ENCODE measurements at regions of chr1 and their contacts with region 1.

Region 1: DNA sequence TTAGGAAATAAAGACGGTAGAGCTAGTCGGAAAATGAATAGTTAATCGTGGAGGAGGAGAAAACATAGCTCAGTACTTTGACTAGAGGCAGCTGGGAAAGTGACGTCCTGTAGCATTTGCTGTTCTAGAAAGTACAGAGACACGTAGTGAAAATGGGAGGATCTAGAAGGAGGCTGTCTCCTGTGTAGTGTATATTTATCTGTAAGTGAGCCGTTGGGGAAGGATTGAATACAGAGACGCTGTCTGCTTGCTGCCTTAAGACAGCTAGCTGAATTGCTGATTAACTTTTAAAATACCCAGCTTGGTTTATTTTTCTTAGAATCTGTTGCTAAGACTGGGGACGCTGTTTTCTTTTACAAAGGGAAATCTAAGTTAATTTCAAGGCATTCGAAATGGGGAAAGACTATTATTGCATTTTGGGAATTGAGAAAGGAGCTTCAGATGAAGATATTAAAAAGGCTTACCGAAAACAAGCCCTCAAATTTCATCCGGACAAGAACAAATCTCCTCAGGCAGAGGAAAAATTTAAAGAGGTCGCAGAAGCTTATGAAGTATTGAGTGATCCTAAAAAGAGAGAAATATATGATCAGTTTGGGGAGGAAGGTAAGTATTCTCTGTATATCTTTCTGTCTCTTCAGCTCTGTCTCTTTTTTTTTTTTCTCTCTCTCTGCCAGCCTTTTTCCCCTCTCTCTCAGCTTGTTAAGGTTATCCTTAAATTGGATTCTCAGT is at the start of gene DNAJB4:
- DNase-seq: peak; percentile 25 to 95 (median 48)
- ATAC-seq: peak; percentile 98
- H3K4me3 ChIP-seq: peak within 1 kb of the TSS; percentile 71
- H3K4me3 Mint-ChIP-seq: peak within 1 kb of the TSS; percentile 86
- H3K27ac ChIP-seq: peak within 1 kb of the TSS; percentile 78 to 96
- H3K27ac Mint-ChIP-seq: peak within 1 kb of the TSS; percentile 98
- H3K4me1 ChIP-seq: peaks cover 4% of the 10 kb centered on the region
- H3K4me1 Mint-ChIP-seq: peaks cover 54% of the 10 kb centered on the region
- H3K27me3 ChIP-seq: no peaks in the 10 kb centered on the region
- H3K27me3 Mint-ChIP-seq: no peaks in the 10 kb centered on the region
- CTCF ChIP-seq: no peak
- total RNA-seq, gene DNAJB4: 19.2 to 22.7 TPM

Region 2: DNA sequence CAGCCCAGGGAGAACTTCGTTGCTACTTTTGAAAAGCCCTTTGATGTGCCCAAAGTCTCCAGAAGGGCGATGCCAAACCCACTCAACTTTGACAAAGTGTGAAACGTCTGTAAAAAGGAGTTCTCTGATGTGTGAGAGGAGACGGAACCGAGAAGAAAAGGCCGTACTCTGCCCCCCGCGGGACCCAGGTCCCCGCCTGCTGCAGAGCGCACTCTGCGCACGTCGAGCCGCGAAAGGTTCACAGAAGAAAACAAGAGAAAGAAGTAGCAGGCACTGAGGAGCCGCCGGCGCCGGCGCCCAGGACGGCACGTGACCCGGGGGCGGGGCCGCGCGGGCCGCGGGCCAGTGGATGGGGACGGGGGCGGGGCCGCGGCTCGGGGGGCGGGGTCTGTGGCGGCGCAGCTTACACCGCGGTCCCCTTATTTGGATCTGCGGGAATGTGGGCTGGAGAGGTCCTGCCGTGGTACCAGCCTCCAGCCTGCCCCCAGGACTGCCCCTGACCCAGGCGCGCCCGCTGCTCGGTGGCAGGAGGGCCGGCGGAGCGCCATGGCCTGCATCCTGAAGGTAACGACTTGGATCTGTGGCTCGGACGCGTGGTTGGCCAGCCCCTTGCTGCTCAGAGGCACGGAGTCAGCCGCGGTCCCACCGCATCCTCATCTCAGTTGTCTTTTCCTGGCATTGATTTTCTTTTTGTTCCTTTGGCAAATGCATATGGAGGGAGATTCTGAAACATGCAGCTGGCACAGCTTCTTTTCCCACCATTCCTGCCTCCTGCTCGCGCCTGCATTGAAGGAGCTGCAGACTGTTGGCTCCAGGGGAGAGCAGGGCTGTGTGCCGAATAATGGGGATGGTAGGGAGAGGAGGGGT is 1930.3 kb before region 1 on chr1 and contains the start of gene ST6GALNAC3:
- CTCF ChIA-PET with region 1: no interaction called
- POLR2A ChIA-PET with region 1: no interaction called
- intact Hi-C with region 1: loop called in 1 of 2 experiments (anchors 10 kb)
- DNase-seq: peak; percentile 59 to 91 (median 74)
- ATAC-seq: peak; percentile 96
- H3K4me3 ChIP-seq: peak within 1 kb of the TSS; percentile 80
- H3K4me3 Mint-ChIP-seq: peak within 1 kb of the TSS; percentile 93
- H3K27ac ChIP-seq: no peak within 1 kb of the TSS
- H3K27ac Mint-ChIP-seq: peak within 1 kb of the TSS; percentile 79
- H3K4me1 ChIP-seq: peaks cover 15% of the 10 kb centered on the region
- H3K4me1 Mint-ChIP-seq: peaks cover 23% of the 10 kb centered on the region
- H3K27me3 ChIP-seq: no peaks in the 10 kb centered on the region
- H3K27me3 Mint-ChIP-seq: no peaks in the 10 kb centered on the region
- CTCF ChIP-seq: no peak
- total RNA-seq, gene ST6GALNAC3: 0.77 to 1.3 TPM

Region 3: DNA sequence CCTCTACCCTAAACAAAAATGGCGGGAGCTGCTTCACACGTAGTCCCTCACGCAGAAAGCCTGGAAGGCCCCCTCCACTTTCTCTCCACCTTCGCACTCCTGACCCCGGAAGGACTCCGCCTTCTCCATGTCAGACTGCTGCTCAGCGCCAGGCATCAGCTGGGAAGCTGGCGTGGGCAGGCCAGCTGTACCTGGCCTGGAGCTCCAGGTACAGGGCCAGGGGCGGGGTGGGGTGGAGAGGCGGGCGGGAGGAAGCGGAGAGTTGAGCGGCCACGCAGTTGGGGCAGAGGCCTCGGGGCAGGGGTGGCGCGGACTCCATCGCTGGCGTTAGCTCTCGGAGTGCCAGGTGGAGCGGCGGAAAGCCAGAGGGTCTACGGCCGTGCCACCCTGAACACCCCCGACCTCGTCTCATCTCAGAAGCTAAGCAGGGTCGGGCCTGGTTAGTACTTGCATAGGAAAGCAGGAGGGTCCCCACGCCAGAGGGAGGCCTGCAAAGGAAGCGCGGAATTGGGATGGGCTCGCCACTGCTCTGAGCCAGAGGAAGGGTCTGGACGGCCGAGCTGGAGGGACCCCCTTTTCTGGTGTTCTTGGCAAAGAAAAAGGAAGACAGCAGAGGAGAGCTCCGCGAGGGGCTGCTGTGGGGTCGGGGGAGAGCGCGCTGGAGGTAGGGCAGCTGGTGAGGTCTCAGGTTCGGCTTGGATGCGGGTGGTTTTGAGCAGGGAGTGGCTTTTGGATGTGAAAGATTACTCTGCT is 225.2 kb before region 1 on chr1 and contains the start of gene MIGA1:
- CTCF ChIA-PET with region 1: no interaction called
- POLR2A ChIA-PET with region 1: interaction called, 16 read pairs
- intact Hi-C with region 1: no loop called
- DNase-seq: peak; percentile 78 to 96 (median 84)
- ATAC-seq: peak; percentile 98
- H3K4me3 ChIP-seq: peak within 1 kb of the TSS; percentile 96
- H3K4me3 Mint-ChIP-seq: peak within 1 kb of the TSS; percentile 97
- H3K27ac ChIP-seq: peak within 1 kb of the TSS; percentile 32 to 55
- H3K27ac Mint-ChIP-seq: peak within 1 kb of the TSS; percentile 89
- H3K4me1 ChIP-seq: peaks cover 14% of the 10 kb centered on the region
- H3K4me1 Mint-ChIP-seq: peaks cover 43% of the 10 kb centered on the region
- H3K27me3 ChIP-seq: no peaks in the 10 kb centered on the region
- H3K27me3 Mint-ChIP-seq: no peaks in the 10 kb centered on the region
- CTCF ChIP-seq: no peak
- total RNA-seq, gene MIGA1: 12.2 to 15.8 TPM

Region 4: DNA sequence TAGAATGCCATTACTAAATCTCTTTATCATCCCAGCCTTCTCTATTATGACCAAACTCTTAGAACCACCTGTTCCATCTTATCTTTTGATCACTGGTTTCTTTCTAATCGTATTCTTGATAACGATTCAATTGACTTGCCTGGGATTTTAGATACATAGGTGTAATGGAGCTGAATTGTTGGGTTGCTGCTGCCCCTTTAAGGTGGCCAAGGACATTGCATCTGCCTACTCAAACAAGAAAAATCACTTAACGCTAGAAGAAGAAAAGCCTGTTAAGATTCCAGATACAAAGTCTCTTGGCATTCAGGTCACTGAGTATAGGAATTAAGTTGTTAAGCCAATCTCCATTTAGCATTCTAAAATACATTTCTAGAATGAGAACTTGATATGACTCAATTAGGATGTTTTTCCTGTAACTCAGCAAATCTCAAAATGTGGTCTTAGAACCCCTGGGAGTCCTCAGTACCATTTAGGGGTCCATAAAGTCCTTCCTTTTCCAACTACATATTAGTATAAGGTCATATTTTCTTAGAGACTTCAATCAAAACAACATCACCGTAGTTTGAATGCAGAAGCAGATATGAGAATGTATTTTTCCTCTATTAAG is 104.1 kb before region 1 on chr1:
- CTCF ChIA-PET with region 1: no interaction called
- POLR2A ChIA-PET with region 1: no interaction called
- intact Hi-C with region 1: no loop called
- DNase-seq: peak in 3 of 14 experiments; percentile 12 to 28 (median 23)
- ATAC-seq: no peak
- H3K4me3 ChIP-seq: no peak overlapping the region
- H3K4me3 Mint-ChIP-seq: no peak overlapping the region
- H3K27ac ChIP-seq: no peak overlapping the region
- H3K27ac Mint-ChIP-seq: no peak overlapping the region
- H3K4me1 ChIP-seq: no peaks in the 10 kb centered on the region
- H3K4me1 Mint-ChIP-seq: no peaks in the 10 kb centered on the region
- H3K27me3 ChIP-seq: no peaks in the 10 kb centered on the region
- H3K27me3 Mint-ChIP-seq: no peaks in the 10 kb centered on the region
- CTCF ChIP-seq: peak; percentile 41

Region 5: GRCh38 chr1:77978969-77979876 is 25.7 kb before region 1 on chr1 and contains the start of gene FUBP1:
- CTCF ChIA-PET with region 1: interaction called, 19 read pairs
- POLR2A ChIA-PET with region 1: interaction called, 419 read pairs
- intact Hi-C with region 1: loop called in 1 of 2 experiments (anchors 1 kb)
- DNase-seq: peak; percentile 91 to 99 (median 93)
- ATAC-seq: peak; percentile 75
- H3K4me3 ChIP-seq: peak within 1 kb of the TSS; percentile 82
- H3K4me3 Mint-ChIP-seq: no peak within 1 kb of the TSS
- H3K27ac ChIP-seq: peak within 1 kb of the TSS; percentile 99
- H3K27ac Mint-ChIP-seq: no peak within 1 kb of the TSS
- H3K4me1 ChIP-seq: peaks cover 33% of the 10 kb centered on the region
- H3K4me1 Mint-ChIP-seq: peaks cover 44% of the 10 kb centered on the region
- H3K27me3 ChIP-seq: no peaks in the 10 kb centered on the region
- H3K27me3 Mint-ChIP-seq: no peaks in the 10 kb centered on the region
- CTCF ChIP-seq: peak; percentile 70
- total RNA-seq, gene FUBP1: 196 to 202 TPM

Region 6: GRCh38 chr1:78045926-78046778 is 41.3 kb after region 1 on chr1 and contains the start of gene GIPC2:
- CTCF ChIA-PET with region 1: no interaction called
- POLR2A ChIA-PET with region 1: interaction called, 33 read pairs
- intact Hi-C with region 1: no loop called
- DNase-seq: peak in 9 of 14 experiments; percentile 6 to 38 (median 11)
- ATAC-seq: peak; percentile 52
- H3K4me3 ChIP-seq: peak within 1 kb of the TSS; percentile 51
- H3K4me3 Mint-ChIP-seq: peak within 1 kb of the TSS; percentile 72
- H3K27ac ChIP-seq: no peak within 1 kb of the TSS
- H3K27ac Mint-ChIP-seq: no peak within 1 kb of the TSS
- H3K4me1 ChIP-seq: peaks cover 16% of the 10 kb centered on the region
- H3K4me1 Mint-ChIP-seq: peaks cover 20% of the 10 kb centered on the region
- H3K27me3 ChIP-seq: peaks cover 21 to 39% of the 10 kb centered on the region in 2 experiments
- H3K27me3 Mint-ChIP-seq: peaks cover 47% of the 10 kb centered on the region
- CTCF ChIP-seq: no peak
- total RNA-seq, gene GIPC2: not detected

Region 7: GRCh38 chr1:78237364-78237916 is 232.6 kb after region 1 on chr1:
- CTCF ChIA-PET with region 1: no interaction called
- POLR2A ChIA-PET with region 1: no interaction called
- intact Hi-C with region 1: no loop called
- DNase-seq: no peak
- ATAC-seq: no peak
- H3K4me3 ChIP-seq: no peak overlapping the region
- H3K4me3 Mint-ChIP-seq: no peak overlapping the region
- H3K27ac ChIP-seq: no peak overlapping the region
- H3K27ac Mint-ChIP-seq: no peak overlapping the region
- H3K4me1 ChIP-seq: no peaks in the 10 kb centered on the region
- H3K4me1 Mint-ChIP-seq: no peaks in the 10 kb centered on the region
- H3K27me3 ChIP-seq: no peaks in the 10 kb centered on the region
- H3K27me3 Mint-ChIP-seq: no peaks in the 10 kb centered on the region
- CTCF ChIP-seq: no peak

Measured in CD4-positive, alpha-beta T cell (primary cell).